ENCODE measurements at regions of chrX and their contacts with region 1.

Region 1: DNA sequence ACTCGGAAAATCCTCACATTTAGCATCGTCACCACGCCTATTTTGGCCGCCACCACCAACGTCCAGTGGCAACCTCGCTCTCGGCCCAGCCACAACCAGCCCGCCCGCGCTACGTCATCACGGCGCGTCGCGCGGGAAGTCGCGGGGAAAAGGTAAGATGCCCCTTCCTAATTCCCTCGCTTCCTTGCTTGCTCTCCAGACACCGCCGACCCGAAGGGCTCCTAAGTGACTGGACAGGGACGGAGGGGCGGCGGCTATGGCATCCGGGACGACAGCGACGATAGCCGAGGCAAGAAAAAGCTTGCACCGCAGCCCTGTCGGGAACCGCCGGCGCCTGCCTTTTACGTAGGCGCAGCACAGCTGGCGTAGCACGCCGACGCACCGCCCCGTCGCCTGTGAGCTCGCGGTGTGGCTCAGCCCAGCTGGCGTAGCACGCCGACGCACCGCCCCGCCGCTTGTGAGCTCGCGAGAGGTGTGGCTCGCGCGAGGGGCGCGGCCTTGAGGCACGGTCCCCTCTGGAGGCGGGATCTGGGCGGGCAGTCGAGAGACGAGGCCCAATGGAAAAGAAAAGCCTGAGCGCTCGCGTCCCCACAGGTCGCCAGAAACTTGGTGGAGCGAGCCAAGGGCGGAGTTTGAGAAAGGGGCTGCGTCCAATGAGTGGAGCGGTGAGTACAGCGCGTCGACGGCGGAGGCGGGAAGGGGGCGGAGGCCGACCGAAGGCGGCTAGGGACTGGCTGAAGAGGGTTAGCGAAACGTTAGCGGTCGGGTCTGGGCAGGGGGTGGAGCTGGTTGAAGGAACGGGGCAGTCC is at the start of gene HDAC6:
- DNase-seq: peak; percentile 86 to 99 (median 88)
- ATAC-seq: peak; percentile 88
- H3K4me3 ChIP-seq: peak within 1 kb of the TSS; percentile 73
- H3K27ac ChIP-seq: peak within 1 kb of the TSS; percentile 99
- H3K4me1 ChIP-seq: peaks cover 12 to 39% of the 10 kb centered on the region in 2 experiments
- H3K27me3 ChIP-seq: no peaks in the 10 kb centered on the region
- CTCF ChIP-seq: no peak
- EP300 ChIP-seq: no peak
- POLR2A ChIP-seq: no peak
- RAD21 ChIP-seq: no peak
- polyA plus RNA-seq, gene HDAC6: 29.9 to 31.4 TPM

Region 2: GRCh38 chrX:48696301-48697181 is 104.9 kb before region 1 on chrX and contains the start of gene SUV39H1:
- CTCF ChIA-PET with region 1: no interaction called
- POLR2A ChIA-PET with region 1: no interaction called
- in situ Hi-C with region 1: no loop called
- intact Hi-C with region 1: loop called (anchors 5 kb)
- DNase-seq: peak; percentile 90 to 93 (median 91)
- ATAC-seq: peak; percentile 97
- H3K4me3 ChIP-seq: peak within 1 kb of the TSS; percentile 80
- H3K27ac ChIP-seq: peak within 1 kb of the TSS; percentile 95
- H3K4me1 ChIP-seq: peaks cover 29 to 34% of the 10 kb centered on the region in 2 experiments
- H3K27me3 ChIP-seq: no peaks in the 10 kb centered on the region
- CTCF ChIP-seq: no peak
- EP300 ChIP-seq: peak; percentile 41; the same call in 1 of the 2 replicates
- POLR2A ChIP-seq: peak; percentile 63
- RAD21 ChIP-seq: no peak
- polyA plus RNA-seq, gene SUV39H1: 4.7 to 6.5 TPM

Region 3: GRCh38 chrX:48720577-48721250 is 80.8 kb before region 1 on chrX:
- CTCF ChIA-PET with region 1: no interaction called
- POLR2A ChIA-PET with region 1: no interaction called
- in situ Hi-C with region 1: no loop called
- intact Hi-C with region 1: no loop called
- DNase-seq: no peak
- ATAC-seq: no peak
- H3K4me3 ChIP-seq: no peak overlapping the region
- H3K27ac ChIP-seq: no peak overlapping the region
- H3K4me1 ChIP-seq: peaks cover 0 to 9% of the 10 kb centered on the region in 2 experiments; a peak in 2 of 5 replicates
- H3K27me3 ChIP-seq: no peaks in the 10 kb centered on the region
- CTCF ChIP-seq: no peak
- EP300 ChIP-seq: no peak
- POLR2A ChIP-seq: no peak
- RAD21 ChIP-seq: no peak

Region 4: GRCh38 chrX:48761674-48762471 is 39.6 kb before region 1 on chrX and contains the start of gene GLOD5:
- CTCF ChIA-PET with region 1: no interaction called
- POLR2A ChIA-PET with region 1: interaction called, 3 read pairs
- in situ Hi-C with region 1: no loop called
- intact Hi-C with region 1: loop called (anchors 5 kb)
- DNase-seq: peak; percentile 46 to 75 (median 56)
- ATAC-seq: peak; percentile 97
- H3K4me3 ChIP-seq: no peak within 1 kb of the TSS
- H3K27ac ChIP-seq: peak within 1 kb of the TSS; percentile 33; the same call in 1 of the 3 replicates
- H3K4me1 ChIP-seq: peaks cover 16 to 19% of the 10 kb centered on the region in 2 experiments
- H3K27me3 ChIP-seq: no peaks in the 10 kb centered on the region
- CTCF ChIP-seq: peak; percentile 61 to 66 (median 61)
- EP300 ChIP-seq: no peak
- POLR2A ChIP-seq: no peak
- RAD21 ChIP-seq: peak; percentile 11 to 80; a peak in 2 of 4 replicates
- polyA plus RNA-seq, gene GLOD5: 3.8 to 4.4 TPM

Region 5: DNA sequence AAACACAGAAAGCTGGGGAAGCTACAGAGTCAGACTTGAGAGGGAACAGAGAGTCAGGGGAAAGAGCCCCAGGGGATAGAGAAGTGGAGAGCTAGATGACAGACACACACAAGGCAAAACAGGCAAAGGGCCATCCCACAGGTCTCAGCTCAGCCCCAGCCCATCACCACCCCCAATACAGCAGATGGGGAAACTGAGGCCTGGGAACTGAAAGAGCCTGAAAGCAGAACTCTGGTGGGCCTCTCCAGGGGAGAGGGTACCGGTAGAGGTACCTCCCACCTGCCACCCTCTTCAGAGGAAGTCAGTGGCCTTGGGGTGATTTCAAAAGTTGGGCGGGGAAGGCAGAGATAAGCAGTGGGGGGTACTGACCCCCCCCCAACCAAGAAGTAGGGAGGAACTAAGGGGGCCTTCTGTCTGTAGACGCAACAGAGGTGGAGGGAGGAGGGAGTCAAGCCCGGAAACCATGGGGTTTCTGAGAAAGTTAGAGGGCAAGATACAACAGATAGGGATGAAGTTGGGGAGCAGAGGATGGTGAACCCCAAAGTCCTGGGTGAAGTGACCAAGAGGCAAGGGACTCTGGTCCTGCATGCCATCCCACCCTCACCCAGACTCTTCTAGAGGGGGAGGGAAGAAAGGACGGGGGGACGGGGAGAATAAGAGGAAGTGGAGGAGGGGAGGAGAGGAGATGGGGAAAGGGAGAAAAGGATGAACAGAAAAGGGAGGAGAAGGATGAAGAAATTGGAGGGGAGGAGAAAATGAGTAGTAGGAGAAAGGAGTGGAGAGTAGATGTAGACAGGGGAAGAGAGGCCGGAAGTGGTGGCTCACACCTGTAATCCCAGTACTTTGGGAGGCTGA is 11.9 kb before region 1 on chrX:
- CTCF ChIA-PET with region 1: no interaction called
- POLR2A ChIA-PET with region 1: interaction called, 6 read pairs
- in situ Hi-C with region 1: no loop called
- intact Hi-C with region 1: loop called (anchors 1 kb)
- DNase-seq: peak in 2 of 4 experiments; percentile 50 to 75
- ATAC-seq: no peak
- H3K4me3 ChIP-seq: peak overlapping the region; percentile 75
- H3K27ac ChIP-seq: peak overlapping the region; percentile 85
- H3K4me1 ChIP-seq: peaks cover 51 to 65% of the 10 kb centered on the region in 2 experiments
- H3K27me3 ChIP-seq: no peaks in the 10 kb centered on the region
- CTCF ChIP-seq: no peak
- EP300 ChIP-seq: peak; percentile 38; the same call in 1 of the 2 replicates
- POLR2A ChIP-seq: no peak
- RAD21 ChIP-seq: no peak

Region 6: DNA sequence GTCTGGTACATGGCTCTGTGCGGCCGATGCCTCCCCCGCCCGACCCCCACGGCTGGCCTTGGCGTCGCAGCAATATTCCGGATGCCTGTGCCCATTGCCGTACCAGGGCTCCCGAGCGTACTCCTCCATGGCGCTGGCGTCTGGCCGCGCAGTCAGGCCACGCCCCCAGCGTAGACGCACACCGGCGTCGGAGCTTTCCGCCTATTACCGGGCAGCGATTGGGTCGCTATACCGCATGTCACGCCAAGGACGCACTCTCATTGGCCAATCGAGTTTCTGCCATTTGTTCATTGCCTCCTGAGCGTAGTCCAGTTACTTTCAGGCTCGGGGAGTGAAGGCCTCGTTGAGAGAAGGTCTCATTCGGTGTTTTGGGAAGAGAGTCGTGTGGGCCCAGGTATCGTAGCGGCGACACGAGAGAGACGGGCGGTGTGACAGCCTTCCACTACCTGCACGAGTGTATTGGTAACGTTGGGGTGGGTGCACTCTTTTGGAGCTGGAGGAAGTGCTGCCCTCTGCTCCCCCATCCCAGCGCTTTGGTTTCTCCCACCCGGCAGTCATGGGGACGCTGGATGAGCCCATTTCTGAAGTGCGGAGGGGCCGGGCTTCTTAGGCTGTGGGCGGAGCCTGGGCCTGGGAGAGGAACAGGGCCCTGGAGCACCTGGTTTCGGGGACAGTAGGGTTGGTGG is 96.3 kb after region 1 on chrX and contains the starts of genes PQBP1 and TIMM17B:
- CTCF ChIA-PET with region 1: no interaction called
- POLR2A ChIA-PET with region 1: interaction called, 4 read pairs
- in situ Hi-C with region 1: no loop called
- intact Hi-C with region 1: loop called (anchors 5 kb)
- DNase-seq: peak; percentile 78 to 96 (median 86)
- ATAC-seq: peak; percentile 93
- H3K4me3 ChIP-seq: peak within 1 kb of the TSS; percentile 72
- H3K27ac ChIP-seq: peak within 1 kb of the TSS; percentile 97
- H3K4me1 ChIP-seq: peaks cover 11 to 20% of the 10 kb centered on the region in 2 experiments; a peak in 4 of 5 replicates
- H3K27me3 ChIP-seq: no peaks in the 10 kb centered on the region
- CTCF ChIP-seq: no peak
- EP300 ChIP-seq: no peak
- POLR2A ChIP-seq: peak; percentile 97
- RAD21 ChIP-seq: no peak
- polyA plus RNA-seq, gene PQBP1: 41.3 to 77.0 TPM
- polyA plus RNA-seq, gene TIMM17B: 9.9 to 69.0 TPM

Region 7: GRCh38 chrX:48937054-48937907 is 135.8 kb after region 1 on chrX:
- CTCF ChIA-PET with region 1: no interaction called
- POLR2A ChIA-PET with region 1: no interaction called
- in situ Hi-C with region 1: no loop called
- intact Hi-C with region 1: loop called (anchors 5 kb)
- DNase-seq: peak; percentile 62 to 93 (median 72)
- ATAC-seq: peak; percentile 82
- H3K4me3 ChIP-seq: no peak overlapping the region; the same call in 1 of the 2 replicates
- H3K27ac ChIP-seq: peak overlapping the region; percentile 91
- H3K4me1 ChIP-seq: peaks cover 51 to 61% of the 10 kb centered on the region in 2 experiments
- H3K27me3 ChIP-seq: no peaks in the 10 kb centered on the region
- CTCF ChIP-seq: peak; percentile 55 to 74 (median 63)
- EP300 ChIP-seq: peak; percentile 80
- POLR2A ChIP-seq: no peak
- RAD21 ChIP-seq: peak; percentile 21 to 56; a peak in 3 of 4 replicates

Region 8: DNA sequence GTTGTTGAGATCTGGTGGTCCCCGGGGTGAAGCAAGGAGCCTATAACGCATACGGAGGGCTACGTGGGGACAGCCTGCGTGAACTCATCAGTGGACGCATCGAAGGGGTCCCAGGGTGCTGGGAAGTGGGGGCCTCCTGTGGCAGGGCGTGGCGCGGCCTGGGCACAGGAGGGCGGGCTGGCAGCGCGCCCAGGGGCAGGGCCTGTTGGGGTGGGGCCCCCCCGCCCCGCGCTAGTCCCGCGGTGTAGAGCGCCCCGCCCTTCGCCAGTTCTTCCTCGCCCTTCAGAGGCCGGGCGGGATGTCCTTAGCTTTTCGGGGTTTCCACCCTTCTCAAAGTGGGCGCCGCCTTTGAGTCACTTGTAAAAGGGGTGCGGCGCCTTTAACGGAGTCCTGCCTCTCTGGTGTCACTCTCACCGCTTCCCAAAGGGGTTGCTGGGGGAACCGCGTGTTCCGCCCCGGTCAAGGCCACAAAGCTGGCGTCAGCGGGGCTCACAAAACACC is 370.8 kb after region 1 on chrX:
- CTCF ChIA-PET with region 1: no interaction called
- POLR2A ChIA-PET with region 1: no interaction called
- in situ Hi-C with region 1: no loop called
- intact Hi-C with region 1: loop called (anchors 10 kb)
- DNase-seq: peak; percentile 51 to 77 (median 54)
- ATAC-seq: peak; percentile 43
- H3K4me3 ChIP-seq: peak overlapping the region; percentile 57
- H3K27ac ChIP-seq: peak overlapping the region; percentile 76
- H3K4me1 ChIP-seq: peaks cover 45 to 56% of the 10 kb centered on the region in 2 experiments
- H3K27me3 ChIP-seq: no peaks in the 10 kb centered on the region
- CTCF ChIP-seq: no peak
- EP300 ChIP-seq: no peak
- POLR2A ChIP-seq: no peak
- RAD21 ChIP-seq: no peak